Heart left ventricle (tissue), 16 donors: ENCODE measurements at regions of chr1 and their contacts with region 1.

Region 1: GRCh38 chr1:147669575-147670316 is 578 bp downstream of the ACP6 start:
- DNase-seq: peak; percentile 30 to 75 (median 45)
- ATAC-seq: peak; percentile 29 to 65 (median 62)
- H3K4me3 ChIP-seq: peak overlapping the region; percentile 67 to 93 (median 81)
- H3K27ac ChIP-seq: peak overlapping the region in 11 of 12 donors; percentile 60 to 86 (median 76)
- H3K4me1 ChIP-seq: peaks cover 0 to 20% (median 7%) of the 10 kb centered on the region in 12 donors
- H3K27me3 ChIP-seq: no peaks in the 10 kb centered on the region
- CTCF ChIP-seq: no peak
- POLR2A ChIP-seq: no peak

Region 2: DNA sequence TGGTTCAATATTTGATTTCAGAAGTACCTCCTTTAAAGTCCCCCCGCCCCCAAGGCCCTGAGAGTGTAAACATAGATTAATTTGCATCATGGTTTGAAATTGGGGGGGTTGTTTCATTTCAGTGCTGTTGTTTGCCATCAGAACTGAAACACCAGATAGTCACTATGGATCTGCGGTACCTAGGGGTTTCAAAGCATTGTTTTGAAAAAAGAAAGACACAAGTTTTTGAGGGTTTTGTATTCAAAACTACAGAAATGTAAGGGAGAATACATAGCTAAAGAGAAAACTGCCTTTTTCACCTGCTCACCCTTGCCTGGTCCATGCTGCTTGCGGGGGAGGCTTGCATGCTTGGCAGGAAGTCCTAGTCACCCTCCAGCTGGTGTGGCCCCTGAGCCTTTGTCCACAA is 58.7 kb before region 1 on chr1:
- intact Hi-C with region 1: loop called in 1 of 10 experiments (anchors 10 kb)
- DNase-seq: no peak
- ATAC-seq: no peak
- H3K4me3 ChIP-seq: no peak overlapping the region
- H3K27ac ChIP-seq: no peak overlapping the region
- H3K4me1 ChIP-seq: peaks cover 0 to 34% (median 10%) of the 10 kb centered on the region in 12 donors
- H3K27me3 ChIP-seq: no peaks in the 10 kb centered on the region
- CTCF ChIP-seq: no peak
- POLR2A ChIP-seq: no peak